ENCODE measurements at regions of chr3 and their contacts with region 1.

Region 1: GRCh38 chr3:196942226-196942914 is at the start of gene NCBP2:
- DNase-seq: peak; percentile 98 to 100 (median 100)
- ATAC-seq: peak; percentile 91
- H3K4me3 ChIP-seq: peak within 1 kb of the TSS; percentile 87 to 91
- H3K4me3 Mint-ChIP-seq: peak within 1 kb of the TSS; percentile 90
- H3K27ac ChIP-seq: peak within 1 kb of the TSS; percentile 95 to 96
- H3K27ac Mint-ChIP-seq: peak within 1 kb of the TSS; percentile 97
- H3K4me1 ChIP-seq: peaks cover 18% of the 10 kb centered on the region
- H3K4me1 Mint-ChIP-seq: peaks cover 44% of the 10 kb centered on the region
- H3K27me3 ChIP-seq: no peaks in the 10 kb centered on the region
- H3K27me3 Mint-ChIP-seq: no peaks in the 10 kb centered on the region
- CTCF ChIP-seq: peak; percentile 59
- total RNA-seq, gene NCBP2: 40.4 to 42.9 TPM

Region 2: DNA sequence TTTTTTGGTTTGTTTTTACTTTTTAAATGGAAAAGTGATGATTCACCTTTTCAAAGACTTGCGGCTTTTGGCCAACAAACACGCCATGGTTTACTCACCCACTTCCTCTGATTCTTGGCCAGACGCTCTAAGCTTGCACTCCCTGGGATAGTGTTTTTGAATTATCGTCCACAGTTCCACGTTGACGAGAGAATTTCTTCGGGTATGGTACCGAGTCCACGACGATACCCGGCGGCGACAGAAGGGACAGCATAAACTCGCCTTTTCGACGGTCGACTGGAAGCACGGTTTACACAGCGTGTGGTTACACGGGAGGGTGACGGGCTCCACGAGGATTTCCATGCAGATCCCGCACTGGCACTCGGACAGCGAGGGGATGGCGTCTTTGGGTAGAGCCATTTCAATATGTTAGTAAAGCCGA is 439.6 kb before region 1 on chr3:
- CTCF ChIA-PET with region 1: no interaction called
- POLR2A ChIA-PET with region 1: no interaction called
- intact Hi-C with region 1: loop called in 1 of 2 experiments (anchors 1 kb)
- DNase-seq: peak in 8 of 9 experiments; percentile 42 to 86 (median 68)
- ATAC-seq: peak; percentile 60
- H3K4me3 ChIP-seq: peak overlapping the region; percentile 65 to 76
- H3K4me3 Mint-ChIP-seq: peak overlapping the region; percentile 96
- H3K27ac ChIP-seq: peak overlapping the region; percentile 78 to 81
- H3K27ac Mint-ChIP-seq: peak overlapping the region; percentile 95
- H3K4me1 ChIP-seq: peaks cover 13% of the 10 kb centered on the region
- H3K4me1 Mint-ChIP-seq: peaks cover 34% of the 10 kb centered on the region
- H3K27me3 ChIP-seq: no peaks in the 10 kb centered on the region
- H3K27me3 Mint-ChIP-seq: no peaks in the 10 kb centered on the region
- CTCF ChIP-seq: no peak

Region 3: GRCh38 chr3:196739671-196740480 is 202.5 kb before region 1 on chr3 and contains the start of gene PAK2:
- CTCF ChIA-PET with region 1: no interaction called
- POLR2A ChIA-PET with region 1: interaction called, 13 read pairs
- intact Hi-C with region 1: loop called in 1 of 2 experiments (anchors 2 kb)
- DNase-seq: peak; percentile 78 to 95 (median 90)
- ATAC-seq: peak; percentile 84
- H3K4me3 ChIP-seq: peak within 1 kb of the TSS; percentile 69 to 77
- H3K4me3 Mint-ChIP-seq: peak within 1 kb of the TSS; percentile 99
- H3K27ac ChIP-seq: peak within 1 kb of the TSS; percentile 82 to 88
- H3K27ac Mint-ChIP-seq: peak within 1 kb of the TSS; percentile 98
- H3K4me1 ChIP-seq: peaks cover 27% of the 10 kb centered on the region
- H3K4me1 Mint-ChIP-seq: peaks cover 33% of the 10 kb centered on the region
- H3K27me3 ChIP-seq: no peaks in the 10 kb centered on the region
- H3K27me3 Mint-ChIP-seq: no peaks in the 10 kb centered on the region
- CTCF ChIP-seq: no peak
- total RNA-seq, gene PAK2: 29.9 to 30.4 TPM

Region 4: DNA sequence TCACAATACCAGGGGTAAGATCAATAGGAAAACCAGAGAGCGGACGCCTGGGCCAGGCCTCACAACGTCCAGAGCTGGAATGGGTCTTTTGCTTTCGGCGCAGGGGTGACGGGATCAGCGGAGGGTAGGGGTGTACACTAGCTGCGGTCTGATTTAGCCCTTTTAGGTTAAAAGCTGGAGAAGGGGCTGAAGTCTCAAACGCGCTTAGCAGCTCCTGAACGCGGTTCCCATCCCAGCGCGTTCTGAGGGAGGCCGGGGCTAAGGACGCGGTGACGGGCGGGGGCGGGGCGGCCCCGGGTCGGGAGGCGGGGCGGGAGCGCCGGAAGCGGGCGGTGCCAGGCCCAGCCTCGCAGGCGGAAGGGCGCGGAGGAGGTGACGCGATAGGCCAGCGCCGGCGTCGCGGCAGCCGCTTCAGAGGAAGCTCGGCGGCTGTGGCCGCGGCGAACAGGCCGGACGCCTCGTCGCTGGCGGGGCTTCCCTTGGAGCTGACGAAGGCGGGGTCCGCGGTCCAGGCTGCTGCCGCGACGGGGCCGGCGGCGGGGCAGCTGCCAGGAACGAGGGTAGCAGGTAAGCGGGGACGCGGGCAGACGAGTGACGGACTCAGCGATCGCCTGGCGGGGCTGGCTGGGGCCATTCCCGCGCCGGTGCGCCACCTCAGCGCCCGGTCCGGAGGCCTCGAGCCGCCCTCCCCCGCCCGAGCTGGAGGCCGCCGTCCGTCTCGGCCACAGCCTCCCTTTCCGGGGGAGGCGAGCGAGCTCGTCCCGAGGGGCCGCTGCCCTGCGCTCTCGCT is 74.7 kb before region 1 on chr3 and contains the start of gene SENP5:
- CTCF ChIA-PET with region 1: interaction called, 10 read pairs
- POLR2A ChIA-PET with region 1: interaction called, 38 read pairs
- intact Hi-C with region 1: loop called (anchors 1 kb)
- DNase-seq: peak; percentile 74 to 95 (median 87)
- ATAC-seq: peak; percentile 97
- H3K4me3 ChIP-seq: peak within 1 kb of the TSS; percentile 70 to 82
- H3K4me3 Mint-ChIP-seq: peak within 1 kb of the TSS; percentile 97
- H3K27ac ChIP-seq: peak within 1 kb of the TSS; percentile 92 to 94
- H3K27ac Mint-ChIP-seq: peak within 1 kb of the TSS; percentile 94
- H3K4me1 ChIP-seq: peaks cover 23% of the 10 kb centered on the region
- H3K4me1 Mint-ChIP-seq: peaks cover 28% of the 10 kb centered on the region
- H3K27me3 ChIP-seq: no peaks in the 10 kb centered on the region
- H3K27me3 Mint-ChIP-seq: no peaks in the 10 kb centered on the region
- CTCF ChIP-seq: no peak
- total RNA-seq, gene SENP5: 75.4 to 77.7 TPM

Region 5: DNA sequence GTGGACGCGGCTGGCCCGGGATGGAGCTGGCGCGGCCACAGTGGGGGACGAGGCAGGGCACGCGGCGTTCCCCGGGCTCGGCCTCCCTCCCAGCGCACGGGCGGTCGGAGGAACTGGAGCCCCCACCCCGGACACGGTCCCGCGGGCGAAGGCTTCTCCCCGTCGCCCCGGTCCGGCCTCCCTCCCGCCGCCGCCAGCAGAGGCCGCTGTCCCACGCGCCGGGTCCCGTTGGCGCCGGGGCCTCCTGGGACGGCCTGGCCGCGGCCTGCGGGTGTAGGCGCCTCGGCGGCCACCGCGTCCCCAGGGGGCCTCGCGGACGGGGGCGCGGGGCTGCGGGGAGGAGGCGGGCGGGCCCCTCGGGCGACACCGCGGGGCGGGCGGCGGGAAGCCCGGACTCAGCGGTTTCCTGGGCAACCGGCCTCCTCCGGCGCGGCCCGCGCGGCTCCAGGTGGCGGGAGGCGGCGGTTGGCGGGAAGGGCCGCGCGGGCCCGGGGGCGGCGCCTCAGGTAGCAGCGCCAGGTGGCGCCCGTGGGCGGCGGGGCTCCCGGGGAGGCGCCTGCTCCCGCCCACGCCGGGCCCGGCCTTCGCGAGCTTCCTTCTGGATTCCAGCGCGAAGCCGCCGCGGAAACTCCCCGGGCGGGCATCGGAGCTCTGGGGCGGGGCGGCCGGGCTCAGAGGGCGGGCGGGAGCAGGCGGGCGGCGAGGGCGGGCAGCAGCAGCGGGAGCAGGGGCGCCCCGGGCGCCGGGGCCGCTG is 60.5 kb after region 1 on chr3:
- CTCF ChIA-PET with region 1: no interaction called
- POLR2A ChIA-PET with region 1: no interaction called
- intact Hi-C with region 1: loop called in 1 of 2 experiments (anchors 1 kb)
- DNase-seq: peak; percentile 49 to 92 (median 77)
- ATAC-seq: peak; percentile 82
- H3K4me3 ChIP-seq: peak overlapping the region; percentile 41 to 58
- H3K4me3 Mint-ChIP-seq: no peak overlapping the region
- H3K27ac ChIP-seq: no peak overlapping the region
- H3K27ac Mint-ChIP-seq: no peak overlapping the region
- H3K4me1 ChIP-seq: peaks cover 8% of the 10 kb centered on the region
- H3K4me1 Mint-ChIP-seq: peaks cover 12% of the 10 kb centered on the region
- H3K27me3 ChIP-seq: no peaks in the 10 kb centered on the region
- H3K27me3 Mint-ChIP-seq: no peaks in the 10 kb centered on the region
- CTCF ChIP-seq: peak; percentile 47

Region 6: GRCh38 chr3:197949754-197950660 is 1007.6 kb after region 1 on chr3 and contains the start of gene RPL35A:
- CTCF ChIA-PET with region 1: no interaction called
- POLR2A ChIA-PET with region 1: no interaction called
- intact Hi-C with region 1: loop called in 1 of 2 experiments (anchors 5 kb)
- DNase-seq: peak; percentile 74 to 96 (median 81)
- ATAC-seq: peak; percentile 91
- H3K4me3 ChIP-seq: peak within 1 kb of the TSS; percentile 59 to 85
- H3K4me3 Mint-ChIP-seq: peak within 1 kb of the TSS; percentile 98
- H3K27ac ChIP-seq: peak within 1 kb of the TSS; percentile 91 to 97
- H3K27ac Mint-ChIP-seq: peak within 1 kb of the TSS; percentile 98
- H3K4me1 ChIP-seq: peaks cover 39% of the 10 kb centered on the region
- H3K4me1 Mint-ChIP-seq: peaks cover 43% of the 10 kb centered on the region
- H3K27me3 ChIP-seq: no peaks in the 10 kb centered on the region
- H3K27me3 Mint-ChIP-seq: no peaks in the 10 kb centered on the region
- CTCF ChIP-seq: no peak
- total RNA-seq, gene RPL35A: 2,004 to 2,100 TPM